AG04450 (cell line): ENCODE measurements at regions of chr9 and their contacts with region 1.

Region 1: DNA sequence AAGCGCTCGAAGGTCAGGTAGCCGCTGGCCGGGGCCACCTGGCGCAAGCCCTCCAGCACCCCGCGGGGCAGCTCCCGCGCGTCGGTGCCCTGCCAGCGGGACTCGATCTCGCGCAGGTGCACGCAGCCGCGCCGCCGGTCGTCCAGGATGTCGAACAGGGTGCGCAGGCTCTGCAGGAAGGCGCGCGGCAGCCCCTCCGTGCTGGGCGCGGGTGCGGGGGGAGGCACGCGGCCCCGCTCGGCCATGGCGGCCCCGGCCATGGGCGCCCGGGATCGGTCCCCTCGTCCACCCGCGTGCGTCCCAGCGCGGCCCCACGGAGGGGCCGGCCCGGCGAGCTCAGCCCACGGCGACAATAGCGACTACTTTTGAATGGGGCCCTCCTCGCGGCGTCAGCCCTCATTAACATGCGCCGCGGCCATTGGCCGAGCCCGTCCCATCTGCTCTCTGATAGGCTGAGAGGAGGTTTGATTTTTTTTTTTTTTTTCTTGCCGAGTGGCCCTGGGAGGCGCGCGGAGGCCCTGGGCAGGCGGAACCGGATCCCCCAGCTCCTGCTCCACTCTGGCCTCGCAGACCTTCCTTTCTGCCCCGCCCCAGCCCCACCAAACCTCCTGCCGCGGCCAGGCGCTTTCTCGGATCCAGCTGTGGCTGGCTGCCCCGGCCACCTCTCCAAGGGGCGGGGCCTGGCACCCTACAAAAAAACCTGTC is at the start of gene SAPCD2:
- DNase-seq: peak; percentile 42
- H3K4me3 ChIP-seq: peak within 1 kb of the TSS; percentile 48
- H3K27ac ChIP-seq: no peak within 1 kb of the TSS
- H3K27me3 ChIP-seq: no peaks in the 10 kb centered on the region
- CTCF ChIP-seq: no peak
- polyA plus RNA-seq, gene SAPCD2: 1.5 and 1.8 TPM in 2 replicates

Region 2: DNA sequence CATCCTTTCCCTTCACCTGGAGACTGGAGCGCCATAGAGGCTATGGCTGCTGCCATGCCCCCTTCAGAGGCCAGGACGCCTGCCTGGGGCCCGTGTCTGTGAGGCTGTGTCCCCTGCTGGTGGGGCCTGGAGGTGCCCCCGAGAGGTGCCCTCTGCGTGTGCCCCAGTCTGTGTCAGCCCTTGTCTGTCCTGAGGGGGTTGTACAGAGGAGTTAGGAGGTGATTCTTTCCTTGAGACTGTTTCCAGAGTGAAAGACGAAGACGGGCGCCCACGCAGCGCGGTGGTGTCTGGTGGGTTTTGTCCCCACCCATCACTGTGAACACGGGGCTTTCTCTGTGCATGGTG is 159.5 kb before region 1 on chr9:
- CTCF ChIA-PET with region 1: no interaction called
- POLR2A ChIA-PET with region 1: no interaction called
- DNase-seq: no peak
- H3K4me3 ChIP-seq: no peak overlapping the region
- H3K27ac ChIP-seq: no peak overlapping the region
- H3K27me3 ChIP-seq: no peaks in the 10 kb centered on the region
- CTCF ChIP-seq: no peak

Region 3: DNA sequence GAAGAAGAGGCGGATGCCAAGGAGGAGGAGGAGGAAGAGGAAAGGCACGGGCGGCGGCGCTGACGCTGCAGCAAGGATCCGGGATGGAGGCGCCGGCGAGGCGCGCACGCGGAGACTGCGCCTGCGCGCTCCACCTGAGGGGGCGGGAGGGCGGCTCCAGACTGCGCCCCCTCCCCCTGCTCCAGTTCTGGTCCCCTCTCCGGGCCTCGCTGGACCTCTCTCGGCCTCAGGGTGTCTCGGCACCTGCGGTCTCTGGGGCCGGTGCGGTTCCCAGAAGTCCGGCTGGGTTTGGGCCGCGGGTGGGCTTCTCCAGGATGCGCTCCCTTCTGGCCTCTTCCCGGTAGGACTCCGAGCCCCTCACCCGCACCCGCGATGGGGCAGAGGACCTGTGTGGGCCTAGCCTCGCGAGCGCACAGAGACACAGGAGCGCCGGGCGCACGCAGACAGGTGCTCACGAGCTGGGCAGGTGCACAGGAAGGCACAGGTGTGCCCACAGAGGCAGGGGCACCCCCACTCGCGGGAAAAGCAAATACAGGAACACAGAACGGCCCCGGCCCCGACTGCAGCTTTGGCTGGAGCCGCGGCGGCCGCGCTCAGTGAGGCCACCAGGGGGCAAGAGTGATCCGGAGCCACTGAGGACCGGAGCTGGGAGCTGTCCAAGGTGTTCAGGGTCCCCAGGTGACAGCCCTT is 24.1 kb before region 1 on chr9 and contains the start of gene NPDC1:
- CTCF ChIA-PET with region 1: interaction called, 104 read pairs
- POLR2A ChIA-PET with region 1: no interaction called
- DNase-seq: no peak
- H3K4me3 ChIP-seq: peak within 1 kb of the TSS; percentile 68
- H3K27ac ChIP-seq: no peak within 1 kb of the TSS
- H3K27me3 ChIP-seq: peaks cover 29% of the 10 kb centered on the region
- CTCF ChIP-seq: peak; percentile 87
- polyA plus RNA-seq, gene NPDC1: 8.9 and 16.5 TPM in 2 replicates

Region 4: DNA sequence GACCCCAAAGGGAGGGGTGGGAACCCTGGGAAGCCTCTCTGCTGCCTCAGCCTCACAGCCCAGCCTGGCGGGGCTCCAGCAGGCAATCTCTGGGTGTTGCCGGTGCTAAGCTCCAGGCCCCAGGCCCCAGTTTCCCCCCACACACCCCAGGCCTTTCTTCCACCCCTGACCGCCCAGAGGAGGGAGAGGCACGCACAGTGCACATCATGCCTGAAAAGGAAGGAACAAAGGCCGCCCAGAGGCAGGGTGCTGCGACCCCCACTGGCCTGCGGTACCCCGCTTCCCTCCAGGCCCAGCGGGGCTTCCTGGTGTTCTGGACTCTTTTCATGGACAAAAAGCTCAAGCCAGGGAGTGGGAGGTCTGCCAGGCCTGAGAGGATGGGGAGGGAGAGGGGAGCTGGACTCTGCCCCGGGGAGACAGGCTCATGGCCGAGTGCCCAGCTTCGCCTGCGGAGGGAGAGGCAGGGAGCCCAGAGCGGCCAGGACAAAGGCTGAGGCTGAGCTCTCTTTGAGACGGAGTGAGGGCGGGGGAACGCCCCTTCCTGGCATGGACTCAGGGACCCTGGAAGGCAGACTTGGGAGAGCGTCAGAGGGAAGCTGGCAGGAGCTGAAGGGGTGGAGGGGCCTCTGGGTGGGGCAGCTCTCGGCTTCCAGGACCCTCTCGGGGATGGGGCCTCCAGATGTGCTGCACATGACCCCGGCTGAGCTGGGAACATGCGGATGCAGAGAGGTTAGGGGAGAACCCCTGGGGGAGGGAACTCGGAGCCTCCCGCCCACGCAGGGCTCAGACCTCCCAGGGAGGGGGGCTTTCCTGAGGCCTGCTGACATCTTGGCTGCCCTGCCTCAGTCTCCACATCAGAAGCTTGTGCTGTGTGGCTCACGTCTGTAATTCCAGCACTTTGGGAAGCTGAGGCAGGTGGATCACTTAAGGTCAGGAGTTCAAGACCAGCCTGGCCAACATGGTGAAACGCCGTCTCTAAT is 14.7 kb before region 1 on chr9:
- CTCF ChIA-PET with region 1: interaction called, 58 read pairs
- POLR2A ChIA-PET with region 1: interaction called, 6 read pairs
- DNase-seq: no peak
- H3K4me3 ChIP-seq: no peak overlapping the region
- H3K27ac ChIP-seq: no peak overlapping the region
- H3K27me3 ChIP-seq: peaks cover 52% of the 10 kb centered on the region
- CTCF ChIP-seq: no peak

Region 5: GRCh38 chr9:137086531-137087408 is 16.4 kb after region 1 on chr9 and contains the start of gene MAN1B1:
- CTCF ChIA-PET with region 1: interaction called, 11 read pairs
- POLR2A ChIA-PET with region 1: interaction called, 5 read pairs
- DNase-seq: peak; percentile 97
- H3K4me3 ChIP-seq: peak within 1 kb of the TSS; percentile 76
- H3K27ac ChIP-seq: peak within 1 kb of the TSS; percentile 75
- H3K27me3 ChIP-seq: no peaks in the 10 kb centered on the region
- CTCF ChIP-seq: no peak
- polyA plus RNA-seq, gene MAN1B1: 40.8 and 50.2 TPM in 2 replicates